ENCODE measurements at regions of chr14 and their contacts with region 1.

Region 1: DNA sequence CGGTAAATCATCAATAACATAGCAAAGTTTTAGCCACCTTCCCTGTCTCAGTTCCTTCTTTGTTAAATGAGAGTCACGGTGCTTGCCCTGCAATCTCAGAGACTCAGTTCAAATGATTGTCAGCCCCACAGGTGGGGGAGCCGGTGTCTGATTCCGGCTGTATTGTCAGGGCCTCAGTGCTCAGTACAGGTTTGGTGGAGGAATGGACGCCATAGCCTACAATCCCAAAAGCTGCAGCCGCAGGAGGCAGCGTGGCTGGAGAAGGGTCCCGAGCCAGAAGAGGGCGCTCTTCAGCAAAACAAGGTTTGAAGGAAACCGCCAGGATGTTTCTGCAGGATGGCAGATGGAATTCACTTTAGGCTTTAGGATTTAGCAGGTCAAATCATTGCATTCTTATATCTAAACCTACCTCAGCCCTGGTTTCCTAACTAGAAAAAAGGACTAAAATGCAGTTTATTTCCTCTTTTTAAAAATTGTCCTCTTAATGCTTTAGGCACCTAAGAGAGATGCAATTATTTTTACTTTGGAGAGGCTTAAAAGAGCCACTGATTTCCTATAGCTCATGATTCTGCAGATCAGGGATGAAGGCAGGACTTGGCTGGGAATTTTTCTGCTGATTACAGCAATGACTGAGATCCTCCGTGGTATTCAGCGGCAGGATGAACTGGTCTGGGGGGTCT is 29.2 kb downstream of the FOS start:
- DNase-seq: peak; percentile 65
- H3K4me3 ChIP-seq: no peak overlapping the region
- H3K27ac ChIP-seq: no peak overlapping the region
- H3K4me1 ChIP-seq: no peaks in the 10 kb centered on the region
- H3K27me3 ChIP-seq: no peaks in the 10 kb centered on the region
- CTCF ChIP-seq: peak; percentile 87 to 93

Region 2: DNA sequence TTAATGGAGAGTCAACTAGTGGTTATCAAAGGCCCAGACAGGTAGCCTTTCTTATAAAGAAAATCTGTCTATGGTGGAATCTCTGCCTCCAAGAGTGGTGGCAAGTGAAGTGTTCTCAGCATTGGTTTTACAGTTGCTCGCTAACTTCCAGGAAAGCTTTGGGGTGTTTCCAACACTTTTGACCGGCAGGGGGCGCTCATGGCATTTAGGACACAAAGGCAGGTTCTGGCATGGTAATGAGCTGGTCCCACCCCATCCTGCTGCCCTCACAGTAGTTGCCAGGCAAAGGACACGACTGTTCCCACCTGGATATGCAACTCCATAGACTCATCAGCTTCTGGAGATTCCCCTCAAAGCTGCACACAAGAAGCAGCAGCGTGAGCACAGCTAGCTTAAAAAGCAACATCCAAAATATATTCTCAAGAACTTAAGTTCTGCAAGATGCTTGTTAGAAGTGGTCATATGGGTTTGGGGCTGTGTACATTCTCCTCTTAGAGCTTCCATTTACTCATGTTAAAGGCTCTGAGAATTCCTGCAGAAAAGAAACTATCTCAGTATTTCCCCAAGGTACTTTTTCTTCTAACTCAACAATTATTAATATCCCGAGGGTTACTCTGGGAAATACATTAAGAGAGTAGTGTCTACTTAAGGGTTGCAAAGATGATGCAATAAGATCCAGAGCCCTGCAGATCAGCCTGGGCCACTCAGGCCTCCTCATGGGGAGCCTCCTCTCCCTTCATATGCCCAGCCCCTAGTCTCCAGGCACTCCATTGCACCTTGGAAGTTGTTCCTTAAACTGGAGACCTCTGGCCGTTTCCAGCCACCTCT is 446.7 kb before region 1 on chr14:
- CTCF ChIA-PET with region 1: interaction called, 3 read pairs
- dilution Hi-C with region 1: no loop called
- in situ Hi-C with region 1: no loop called
- intact Hi-C with region 1: loop called (anchors 2 kb)
- DNase-seq: peak; percentile 69
- H3K4me3 ChIP-seq: no peak overlapping the region
- H3K27ac ChIP-seq: no peak overlapping the region
- H3K4me1 ChIP-seq: peaks cover 3% of the 10 kb centered on the region
- H3K27me3 ChIP-seq: no peaks in the 10 kb centered on the region
- CTCF ChIP-seq: peak; percentile 85 to 89

Region 3: GRCh38 chr14:74945823-74946682 is 361.8 kb before region 1 on chr14:
- CTCF ChIA-PET with region 1: no interaction called
- dilution Hi-C with region 1: no loop called
- in situ Hi-C with region 1: no loop called
- intact Hi-C with region 1: loop called (anchors 10 kb)
- DNase-seq: peak; percentile 41
- H3K4me3 ChIP-seq: no peak overlapping the region
- H3K27ac ChIP-seq: no peak overlapping the region
- H3K4me1 ChIP-seq: peaks cover 45% of the 10 kb centered on the region
- H3K27me3 ChIP-seq: no peaks in the 10 kb centered on the region
- CTCF ChIP-seq: peak; percentile 90 to 91

Region 4: DNA sequence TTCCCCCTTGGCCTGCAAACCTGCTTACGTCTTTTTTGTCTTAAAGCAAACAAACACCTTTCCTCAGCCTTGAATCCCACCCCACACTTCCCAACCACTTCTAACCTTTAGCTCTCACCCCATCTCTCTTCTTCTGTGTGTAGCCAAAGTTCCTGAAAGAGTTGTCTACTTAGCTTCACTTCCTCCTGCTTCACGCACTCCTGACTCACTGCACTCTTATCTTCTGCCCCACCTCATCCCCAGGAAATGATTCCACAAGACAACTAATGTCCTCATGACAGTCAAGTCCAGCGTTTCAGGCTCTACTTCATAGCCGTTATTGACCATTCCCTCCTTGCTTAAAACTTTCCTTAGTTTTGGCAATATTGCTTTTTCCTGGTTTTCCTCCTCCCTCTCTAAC is 282.8 kb before region 1 on chr14:
- CTCF ChIA-PET with region 1: no interaction called
- dilution Hi-C with region 1: no loop called
- in situ Hi-C with region 1: no loop called
- intact Hi-C with region 1: no loop called
- DNase-seq: no peak
- H3K4me3 ChIP-seq: no peak overlapping the region
- H3K27ac ChIP-seq: no peak overlapping the region
- H3K4me1 ChIP-seq: no peaks in the 10 kb centered on the region
- H3K27me3 ChIP-seq: no peaks in the 10 kb centered on the region
- CTCF ChIP-seq: no peak

Region 5: GRCh38 chr14:75333606-75334548 is 26.0 kb after region 1 on chr14:
- CTCF ChIA-PET with region 1: no interaction called
- dilution Hi-C with region 1: loop called (anchors 5 kb)
- in situ Hi-C with region 1: no loop called
- intact Hi-C with region 1: no loop called
- DNase-seq: no peak
- H3K4me3 ChIP-seq: no peak overlapping the region
- H3K27ac ChIP-seq: no peak overlapping the region
- H3K4me1 ChIP-seq: no peaks in the 10 kb centered on the region
- H3K27me3 ChIP-seq: no peaks in the 10 kb centered on the region
- CTCF ChIP-seq: no peak

Region 6: DNA sequence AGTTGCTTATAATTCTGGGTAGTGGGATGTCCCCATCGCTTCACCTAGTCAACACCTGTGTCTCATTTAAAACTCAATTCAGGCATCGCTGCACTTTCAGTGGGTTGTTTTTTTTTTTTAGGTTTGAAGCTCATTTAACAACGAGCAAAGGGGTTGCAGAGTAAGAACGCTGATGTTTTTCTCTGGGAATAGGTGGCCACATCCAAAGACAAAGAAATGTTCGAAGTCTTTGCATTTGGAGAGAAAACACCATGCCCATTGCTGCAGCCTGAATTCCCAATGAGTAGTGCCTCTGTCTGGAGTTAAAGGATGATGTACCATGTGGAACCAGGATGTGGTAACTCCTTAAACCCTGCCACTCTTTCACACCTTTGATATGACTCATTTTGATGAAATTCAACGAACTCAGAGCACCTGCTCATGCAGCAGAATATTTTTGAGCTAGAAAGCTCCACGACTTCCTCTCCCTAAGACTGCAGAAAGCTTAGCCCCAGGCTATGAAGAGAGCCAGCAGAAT is 179.4 kb after region 1 on chr14:
- CTCF ChIA-PET with region 1: interaction called, 17 read pairs
- dilution Hi-C with region 1: no loop called
- in situ Hi-C with region 1: loop called (anchors 5 kb)
- intact Hi-C with region 1: loop called (anchors 1 kb)
- DNase-seq: peak; percentile 76
- H3K4me3 ChIP-seq: no peak overlapping the region
- H3K27ac ChIP-seq: no peak overlapping the region
- H3K4me1 ChIP-seq: peaks cover 8% of the 10 kb centered on the region
- H3K27me3 ChIP-seq: no peaks in the 10 kb centered on the region
- CTCF ChIP-seq: no peak

Region 7: DNA sequence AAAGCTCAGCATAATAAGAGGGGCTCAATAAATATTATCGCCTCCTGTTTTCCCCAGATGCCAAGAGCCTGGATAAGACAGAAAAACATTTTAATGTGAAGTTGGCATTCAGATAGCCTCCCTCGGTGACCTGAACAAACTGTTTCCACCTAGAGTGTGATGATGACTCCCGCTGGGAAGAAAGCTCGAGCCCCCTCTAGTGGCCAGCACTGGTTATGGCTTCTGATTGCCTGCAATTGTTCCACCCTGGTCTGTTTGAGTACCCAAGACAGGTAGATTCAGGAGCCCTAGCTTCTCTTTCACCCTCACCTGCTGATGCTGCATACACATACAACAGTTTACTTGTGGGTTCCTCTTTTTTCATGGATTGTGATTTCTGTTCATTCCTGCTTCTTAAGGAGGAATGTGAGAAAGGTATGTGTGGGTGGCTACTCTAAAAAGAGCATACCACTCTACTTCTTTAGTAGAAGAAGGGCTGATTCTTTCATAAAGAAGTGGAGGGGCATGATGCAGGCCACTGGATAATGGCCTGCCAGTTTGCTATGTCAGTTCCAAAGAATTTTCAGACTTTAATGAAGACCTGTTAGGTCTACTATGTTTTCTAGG is 346.4 kb after region 1 on chr14:
- CTCF ChIA-PET with region 1: no interaction called
- dilution Hi-C with region 1: no loop called
- in situ Hi-C with region 1: no loop called
- intact Hi-C with region 1: loop called (anchors 5 kb)
- DNase-seq: peak; percentile 61
- H3K4me3 ChIP-seq: no peak overlapping the region
- H3K27ac ChIP-seq: no peak overlapping the region
- H3K4me1 ChIP-seq: peaks cover 11% of the 10 kb centered on the region
- H3K27me3 ChIP-seq: no peaks in the 10 kb centered on the region
- CTCF ChIP-seq: peak; percentile 99

Measured in mammary epithelial cell (primary cell).